Left cardiac atrium (tissue), 4 donors: ENCODE measurements at regions of chr15 and their contacts with region 1.

Region 1: DNA sequence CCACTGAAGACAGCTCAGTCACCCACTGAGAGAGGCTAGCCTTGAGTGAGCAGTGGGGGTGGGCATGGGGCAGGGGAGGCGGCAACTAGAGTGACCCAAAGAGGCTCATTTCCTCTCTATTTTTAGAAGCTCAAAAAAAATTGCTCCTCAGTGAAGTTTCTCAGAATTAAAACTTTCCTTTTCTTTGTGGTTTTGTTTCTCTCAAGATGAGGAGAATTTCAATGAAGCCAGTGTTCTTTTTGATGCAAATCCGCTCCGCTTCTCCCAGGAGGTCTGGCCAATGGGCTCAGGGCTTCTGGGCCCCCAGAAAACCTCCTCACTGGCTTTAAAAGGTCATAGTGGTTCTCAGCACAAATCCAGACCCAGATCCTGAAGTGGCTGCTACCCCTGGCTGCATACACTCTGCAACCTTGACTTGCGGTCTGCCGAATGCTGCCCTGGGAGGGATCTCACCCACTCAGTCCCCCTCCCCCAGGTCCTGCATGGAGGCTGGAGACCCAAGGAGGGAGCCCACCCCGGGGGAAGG is at the start of gene ACSBG1:
- DNase-seq: no peak
- ATAC-seq: no peak
- total RNA-seq, gene ACSBG1: 0.29 to 0.32 TPM

Region 2: DNA sequence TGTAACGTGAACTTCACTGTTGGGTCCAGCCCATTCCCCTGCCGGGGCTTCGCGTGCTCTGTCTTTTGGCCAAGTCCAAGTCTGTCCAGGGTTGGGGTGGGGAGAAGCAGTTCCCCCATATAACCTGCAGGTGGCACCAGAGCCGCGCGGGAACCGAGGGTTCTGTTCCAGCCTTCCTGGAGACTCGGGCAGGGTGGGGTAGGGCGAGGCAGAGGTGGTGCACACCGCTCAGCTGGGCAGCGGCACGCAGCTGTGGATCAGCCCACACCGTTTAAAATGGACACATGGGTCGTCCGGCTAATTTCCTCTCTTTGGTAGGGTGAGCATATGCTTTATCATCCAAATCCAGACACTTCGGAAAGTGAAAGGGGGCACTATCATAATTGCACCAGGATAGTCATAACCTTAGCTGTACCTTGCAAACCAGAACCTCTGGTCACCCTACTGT is 275.1 kb before region 1 on chr15:
- intact Hi-C with region 1: loop called in 1 of 2 experiments (anchors 5 kb)
- DNase-seq: peak; percentile 80
- ATAC-seq: peak; percentile 96 to 99

Region 3: DNA sequence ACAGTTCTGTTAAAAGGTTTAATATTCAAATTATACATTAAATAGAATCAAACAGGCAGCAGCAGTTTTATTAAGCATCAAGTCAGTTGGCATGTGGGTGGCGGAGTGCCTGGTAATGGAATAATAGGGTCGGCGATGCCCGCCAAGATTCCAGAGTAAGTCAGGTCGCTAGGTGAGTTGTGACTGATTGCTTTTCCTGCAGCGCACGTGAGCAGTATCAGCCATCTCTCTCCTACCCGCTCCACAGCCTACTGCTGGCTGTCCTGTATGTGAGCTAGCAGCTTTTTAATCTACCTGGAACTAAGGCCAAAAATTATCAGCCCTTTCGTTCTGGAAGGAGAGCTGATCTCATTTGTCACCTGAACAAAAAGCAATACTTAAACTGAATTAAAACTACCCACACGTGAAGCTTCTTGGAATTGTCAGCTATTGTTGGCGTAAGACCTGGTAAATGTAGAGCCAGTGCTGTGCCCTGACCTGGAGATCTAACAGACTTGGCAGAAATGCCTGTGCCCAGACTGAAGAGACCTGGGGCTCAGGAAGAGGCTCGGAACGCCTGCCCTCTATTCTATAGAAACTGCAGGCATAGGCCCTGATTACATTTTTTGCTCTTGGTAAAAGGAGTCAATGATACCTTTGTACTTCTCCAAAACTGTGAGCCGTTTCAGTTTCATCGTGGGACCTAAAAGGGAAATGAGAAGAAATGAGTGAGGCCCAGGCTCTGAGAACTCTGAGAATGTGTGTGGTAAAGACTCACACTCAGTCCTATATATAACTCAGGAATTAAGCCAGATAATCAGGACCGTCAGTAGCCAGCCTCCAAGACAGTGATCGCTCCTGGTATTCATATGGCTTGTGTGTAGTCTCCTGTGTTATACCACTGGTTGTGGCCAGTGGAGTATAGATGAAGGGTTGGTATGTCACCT is 63.5 kb before region 1 on chr15:
- intact Hi-C with region 1: no loop called
- DNase-seq: no peak
- ATAC-seq: peak in 1 of 2 donors; percentile 15

Region 4: DNA sequence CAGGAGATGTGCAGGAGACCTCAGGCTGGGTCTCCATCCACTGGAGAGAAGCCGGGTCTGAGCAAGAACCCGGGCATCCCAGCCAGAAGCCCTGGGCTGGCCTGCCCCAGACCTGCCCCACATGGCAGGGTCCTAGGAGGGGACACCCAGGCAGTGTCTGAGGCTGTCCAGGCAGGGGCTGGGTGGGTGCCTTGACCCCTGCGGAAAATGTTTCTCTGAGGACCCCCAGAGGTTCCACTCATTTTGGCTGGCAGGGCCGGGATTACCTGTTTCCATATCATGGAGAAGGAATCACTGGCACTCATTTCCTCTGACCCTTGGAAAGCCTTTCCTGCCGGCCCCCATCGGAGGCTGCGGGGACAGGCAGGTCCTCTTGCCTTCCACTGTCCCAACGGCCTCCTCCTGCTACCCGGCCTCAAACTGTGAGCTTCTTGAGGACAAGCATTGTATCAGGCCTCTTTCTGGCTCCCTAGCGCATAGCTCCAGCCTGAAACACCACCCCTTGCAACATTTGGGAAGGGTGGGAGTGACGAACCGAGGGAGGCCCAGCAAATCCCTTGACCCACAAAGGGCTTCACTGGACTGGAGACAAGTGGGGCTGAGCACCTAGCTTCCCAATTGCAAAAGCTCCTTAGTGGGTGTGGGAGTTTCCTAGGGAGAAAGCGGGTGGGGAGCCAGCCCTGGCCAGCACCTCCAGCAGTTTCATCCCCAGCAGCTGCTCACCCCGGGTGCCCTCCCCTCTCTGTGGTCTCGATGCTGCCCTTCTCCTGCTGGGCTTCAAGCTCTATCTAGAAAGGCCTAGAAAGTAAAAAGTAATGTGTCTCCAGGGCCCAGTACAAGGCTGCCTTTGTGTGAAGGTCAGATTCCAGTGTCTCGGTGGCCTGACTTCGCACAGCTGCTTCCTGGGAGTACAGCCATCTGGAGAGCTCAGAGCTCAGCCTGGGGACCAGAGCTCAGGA is 29.9 kb before region 1 on chr15:
- intact Hi-C with region 1: loop called in 1 of 2 experiments (anchors 5 kb)
- DNase-seq: peak; percentile 40
- ATAC-seq: peak; percentile 47 to 76